Caco-2 (cell line): ENCODE measurements at regions of chr2 and their contacts with region 1.

Region 1: DNA sequence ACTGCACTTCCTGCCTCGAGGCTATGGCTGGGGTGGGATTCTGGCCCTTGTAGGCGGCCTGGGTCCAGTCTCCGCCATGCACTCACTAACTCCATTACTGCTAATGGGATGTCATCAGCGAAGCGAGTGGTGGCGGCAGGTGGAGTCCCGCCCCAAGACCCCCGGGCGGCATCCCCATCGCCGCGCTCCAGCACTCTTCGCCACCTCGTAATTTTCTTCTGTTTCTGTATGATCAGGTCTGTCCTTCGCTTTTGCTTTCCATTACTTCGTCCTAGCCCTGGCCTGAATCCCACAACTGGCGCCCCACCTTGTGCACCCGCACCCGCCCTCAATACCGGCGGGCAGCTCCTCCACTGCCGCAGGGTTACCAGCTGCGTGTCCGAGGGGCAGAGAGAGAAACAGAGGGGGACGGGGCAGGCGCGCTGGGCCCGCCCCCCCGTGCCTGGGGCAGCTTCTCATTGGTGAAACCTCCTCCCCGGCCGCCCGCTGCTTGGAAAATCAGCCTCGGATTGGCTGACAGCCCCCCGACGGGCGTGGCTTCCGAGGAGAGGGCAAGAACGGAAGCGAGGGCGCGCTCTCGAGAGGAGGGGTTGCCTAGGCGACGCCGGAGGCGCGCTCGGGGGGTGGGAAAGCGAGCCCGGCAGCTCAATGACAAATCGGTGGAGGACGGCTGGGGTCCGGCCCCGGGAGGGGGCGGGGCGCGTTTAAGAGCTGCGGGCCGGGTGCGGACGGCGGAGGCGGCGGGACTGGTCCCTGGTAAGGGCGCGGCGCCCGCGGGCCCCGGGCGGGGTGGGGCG is at the start of gene RALB:
- DNase-seq: peak; percentile 100
- H3K4me3 ChIP-seq: peak within 1 kb of the TSS; percentile 79
- H3K4me3 Mint-ChIP-seq: peak within 1 kb of the TSS; percentile 82
- H3K27ac Mint-ChIP-seq: peak within 1 kb of the TSS; percentile 68
- H3K4me1 ChIP-seq: peaks cover 18% of the 10 kb centered on the region
- H3K4me1 Mint-ChIP-seq: peaks cover 27% of the 10 kb centered on the region
- H3K27me3 ChIP-seq: no peaks in the 10 kb centered on the region
- H3K27me3 Mint-ChIP-seq: no peaks in the 10 kb centered on the region
- CTCF ChIP-seq: no peak
- total RNA-seq, gene RALB: 56.5 and 59.4 TPM in 2 replicates

Region 2: GRCh38 chr2:119950966-119951365 is 301.5 kb before region 1 on chr2:
- CTCF ChIA-PET with region 1: no interaction called
- POLR2A ChIA-PET with region 1: no interaction called
- intact Hi-C with region 1: no loop called
- DNase-seq: no peak
- H3K4me3 ChIP-seq: no peak overlapping the region
- H3K4me3 Mint-ChIP-seq: no peak overlapping the region
- H3K27ac Mint-ChIP-seq: no peak overlapping the region
- H3K4me1 ChIP-seq: no peaks in the 10 kb centered on the region
- H3K4me1 Mint-ChIP-seq: no peaks in the 10 kb centered on the region
- H3K27me3 ChIP-seq: no peaks in the 10 kb centered on the region
- H3K27me3 Mint-ChIP-seq: no peaks in the 10 kb centered on the region
- CTCF ChIP-seq: no peak

Region 3: GRCh38 chr2:120134263-120134662 is 118.2 kb before region 1 on chr2:
- CTCF ChIA-PET with region 1: no interaction called
- POLR2A ChIA-PET with region 1: no interaction called
- intact Hi-C with region 1: no loop called
- DNase-seq: no peak
- H3K4me3 ChIP-seq: no peak overlapping the region
- H3K4me3 Mint-ChIP-seq: no peak overlapping the region
- H3K27ac Mint-ChIP-seq: peak overlapping the region; percentile 27
- H3K4me1 ChIP-seq: no peaks in the 10 kb centered on the region
- H3K4me1 Mint-ChIP-seq: no peaks in the 10 kb centered on the region
- H3K27me3 ChIP-seq: no peaks in the 10 kb centered on the region
- H3K27me3 Mint-ChIP-seq: no peaks in the 10 kb centered on the region
- CTCF ChIP-seq: no peak

Region 4: GRCh38 chr2:120223034-120223912 is 29.1 kb before region 1 on chr2 and contains the start of gene TMEM185B:
- CTCF ChIA-PET with region 1: interaction called, 9 read pairs
- POLR2A ChIA-PET with region 1: interaction called, 46 read pairs
- intact Hi-C with region 1: loop called (anchors 1 kb)
- DNase-seq: peak; percentile 96 to 98
- H3K4me3 ChIP-seq: peak within 1 kb of the TSS; percentile 76
- H3K4me3 Mint-ChIP-seq: peak within 1 kb of the TSS; percentile 97
- H3K27ac Mint-ChIP-seq: peak within 1 kb of the TSS; percentile 96
- H3K4me1 ChIP-seq: peaks cover 23% of the 10 kb centered on the region
- H3K4me1 Mint-ChIP-seq: peaks cover 17% of the 10 kb centered on the region
- H3K27me3 ChIP-seq: no peaks in the 10 kb centered on the region
- H3K27me3 Mint-ChIP-seq: no peaks in the 10 kb centered on the region
- CTCF ChIP-seq: peak; percentile 54 to 77
- total RNA-seq, gene TMEM185B: 67.3 and 69.9 TPM in 2 replicates

Region 5: DNA sequence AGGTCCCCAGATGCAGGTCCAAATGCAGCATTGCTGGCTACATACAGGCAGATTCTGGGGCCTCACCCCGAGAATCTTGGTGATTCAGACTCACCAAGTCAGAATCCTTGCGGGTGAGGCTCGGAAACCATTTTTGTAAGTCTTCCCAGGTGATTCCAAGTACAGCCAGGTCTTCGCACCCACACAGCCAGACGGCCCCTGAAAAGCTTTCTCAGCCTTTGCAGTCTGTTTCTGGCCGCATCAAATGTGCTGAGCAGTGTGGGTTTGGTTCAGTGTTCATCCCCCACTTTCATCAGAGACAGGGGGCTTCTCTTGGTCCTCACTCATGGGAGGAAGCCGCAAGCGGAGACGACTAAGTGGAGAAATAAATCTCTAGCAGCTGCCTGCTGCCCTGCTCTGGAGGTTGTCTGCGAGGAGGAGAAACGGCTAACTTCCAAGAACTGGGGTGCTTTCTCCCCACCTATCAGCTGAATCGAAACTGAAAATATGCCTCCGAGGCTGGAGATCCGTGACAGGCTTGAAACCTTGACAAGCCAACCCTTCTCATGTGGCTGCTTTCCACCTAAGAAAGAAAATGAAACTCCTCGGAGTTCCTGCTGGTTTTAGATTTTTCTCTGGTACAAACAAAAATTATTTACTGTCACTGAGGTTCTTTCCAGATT is 20.3 kb before region 1 on chr2:
- CTCF ChIA-PET with region 1: interaction called, 3 read pairs
- POLR2A ChIA-PET with region 1: interaction called, 9 read pairs
- intact Hi-C with region 1: loop called (anchors 2 kb)
- DNase-seq: peak in 1 of 2 experiments; percentile 26
- H3K4me3 ChIP-seq: no peak overlapping the region
- H3K4me3 Mint-ChIP-seq: no peak overlapping the region
- H3K27ac Mint-ChIP-seq: peak overlapping the region; percentile 35
- H3K4me1 ChIP-seq: peaks cover 38% of the 10 kb centered on the region
- H3K4me1 Mint-ChIP-seq: peaks cover 37% of the 10 kb centered on the region
- H3K27me3 ChIP-seq: no peaks in the 10 kb centered on the region
- H3K27me3 Mint-ChIP-seq: no peaks in the 10 kb centered on the region
- CTCF ChIP-seq: no peak

Region 6: DNA sequence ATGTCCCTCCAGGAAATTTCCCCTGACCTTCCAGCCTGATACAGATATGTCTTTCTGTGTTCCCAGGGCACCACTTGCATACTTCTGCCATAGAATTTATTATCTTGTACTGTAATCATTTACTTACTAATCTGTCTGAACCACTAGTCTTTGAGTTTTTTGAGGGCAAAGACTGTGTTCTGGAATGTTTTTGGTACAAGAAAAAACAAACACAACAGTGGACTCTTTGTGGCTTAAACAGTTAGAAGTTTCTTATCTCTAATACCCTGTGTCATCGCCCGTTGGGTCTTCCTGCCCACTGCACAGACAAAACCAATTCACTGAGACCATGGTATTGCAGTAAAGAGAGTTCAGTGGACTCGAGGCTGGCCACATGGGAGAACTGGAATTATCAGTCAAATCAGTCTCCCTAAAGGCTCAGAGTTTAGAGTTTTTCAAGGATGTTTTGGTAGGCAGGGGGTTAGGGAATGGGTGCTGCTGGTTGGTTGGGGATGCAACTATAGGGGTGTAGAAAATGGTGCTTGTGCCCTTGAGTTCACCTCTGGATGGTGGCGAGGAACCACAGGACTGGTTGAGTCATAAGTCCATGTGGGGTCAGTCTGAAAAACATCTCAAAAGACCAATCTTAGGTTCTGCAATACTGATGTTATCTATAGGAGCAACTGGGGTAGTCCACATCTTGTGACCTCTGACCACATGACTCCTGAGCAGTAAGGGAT is 20.5 kb after region 1 on chr2:
- CTCF ChIA-PET with region 1: interaction called, 3 read pairs
- POLR2A ChIA-PET with region 1: interaction called, 3 read pairs
- intact Hi-C with region 1: loop called (anchors 2 kb)
- DNase-seq: peak in 1 of 2 experiments; percentile 30
- H3K4me3 ChIP-seq: no peak overlapping the region
- H3K4me3 Mint-ChIP-seq: peak overlapping the region; percentile 8
- H3K27ac Mint-ChIP-seq: peak overlapping the region; percentile 9
- H3K4me1 ChIP-seq: peaks cover 33% of the 10 kb centered on the region
- H3K4me1 Mint-ChIP-seq: peaks cover 26% of the 10 kb centered on the region
- H3K27me3 ChIP-seq: no peaks in the 10 kb centered on the region
- H3K27me3 Mint-ChIP-seq: no peaks in the 10 kb centered on the region
- CTCF ChIP-seq: no peak

Region 7: GRCh38 chr2:120283649-120284048 is 31.2 kb after region 1 on chr2:
- CTCF ChIA-PET with region 1: interaction called, 3 read pairs
- POLR2A ChIA-PET with region 1: interaction called, 3 read pairs
- intact Hi-C with region 1: loop called (anchors 2 kb)
- DNase-seq: peak in 1 of 2 experiments; percentile 26
- H3K4me3 ChIP-seq: no peak overlapping the region
- H3K4me3 Mint-ChIP-seq: no peak overlapping the region
- H3K27ac Mint-ChIP-seq: no peak overlapping the region
- H3K4me1 ChIP-seq: peaks cover 15% of the 10 kb centered on the region
- H3K4me1 Mint-ChIP-seq: peaks cover 17% of the 10 kb centered on the region
- H3K27me3 ChIP-seq: no peaks in the 10 kb centered on the region
- H3K27me3 Mint-ChIP-seq: no peaks in the 10 kb centered on the region
- CTCF ChIP-seq: peak; percentile 43 to 55